Posterior vena cava (tissue), 2 donors: ENCODE measurements at regions of chr4 and their contacts with region 1.

Region 1: DNA sequence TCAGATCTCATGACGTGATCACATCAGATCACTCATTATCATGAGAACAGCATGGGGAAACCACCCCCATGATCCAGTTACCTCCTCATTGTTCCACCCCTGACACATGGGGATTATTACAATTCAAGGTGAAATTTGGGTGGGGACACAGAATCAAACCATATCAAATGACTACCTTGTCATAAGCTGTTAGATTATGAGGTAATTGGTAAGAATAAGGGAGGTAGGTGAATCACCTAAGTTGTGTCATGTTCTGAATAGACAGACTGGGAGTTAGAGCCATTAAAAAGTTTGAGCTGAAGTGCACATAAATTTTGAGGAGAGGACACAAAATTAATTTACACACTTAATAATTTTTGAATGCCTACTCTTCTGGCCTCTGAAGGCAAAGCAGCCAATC is 24.7 kb downstream of the SLC9B1 start:
- DNase-seq: no peak

Region 2: DNA sequence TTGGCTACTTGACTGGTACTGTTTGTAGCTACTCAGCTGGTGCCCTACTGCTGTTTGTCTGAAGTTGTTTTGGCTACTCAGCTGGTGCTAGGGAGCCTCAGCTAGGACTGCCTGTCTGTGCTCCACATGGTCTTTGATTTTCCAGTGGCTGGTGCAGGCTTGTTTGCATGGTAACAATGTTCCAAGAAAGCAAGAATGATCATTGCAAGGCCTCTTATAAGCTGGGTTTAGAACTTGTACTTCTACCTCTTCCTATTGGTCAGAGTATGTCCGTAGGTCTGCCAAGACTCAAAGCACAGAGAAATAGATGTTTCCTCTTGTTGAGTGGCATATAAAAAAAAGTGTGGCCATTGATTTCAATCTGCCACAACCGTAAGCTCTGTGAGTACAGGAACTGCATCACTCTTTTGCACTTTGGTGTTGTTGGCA is 476.1 kb before region 1 on chr4:
- intact Hi-C with region 1: no loop called
- DNase-seq: no peak

Region 3: GRCh38 chr4:103032574-103032973 is 37.8 kb after region 1 on chr4:
- intact Hi-C with region 1: no loop called
- DNase-seq: no peak

Region 4: GRCh38 chr4:104671419-104671818 is 1676.6 kb after region 1 on chr4:
- intact Hi-C with region 1: loop called in 1 of 2 experiments (anchors 10 kb)
- DNase-seq: no peak